WTC11 (cell line): ENCODE measurements at regions of chr1 and their contacts with region 1.

Region 1: DNA sequence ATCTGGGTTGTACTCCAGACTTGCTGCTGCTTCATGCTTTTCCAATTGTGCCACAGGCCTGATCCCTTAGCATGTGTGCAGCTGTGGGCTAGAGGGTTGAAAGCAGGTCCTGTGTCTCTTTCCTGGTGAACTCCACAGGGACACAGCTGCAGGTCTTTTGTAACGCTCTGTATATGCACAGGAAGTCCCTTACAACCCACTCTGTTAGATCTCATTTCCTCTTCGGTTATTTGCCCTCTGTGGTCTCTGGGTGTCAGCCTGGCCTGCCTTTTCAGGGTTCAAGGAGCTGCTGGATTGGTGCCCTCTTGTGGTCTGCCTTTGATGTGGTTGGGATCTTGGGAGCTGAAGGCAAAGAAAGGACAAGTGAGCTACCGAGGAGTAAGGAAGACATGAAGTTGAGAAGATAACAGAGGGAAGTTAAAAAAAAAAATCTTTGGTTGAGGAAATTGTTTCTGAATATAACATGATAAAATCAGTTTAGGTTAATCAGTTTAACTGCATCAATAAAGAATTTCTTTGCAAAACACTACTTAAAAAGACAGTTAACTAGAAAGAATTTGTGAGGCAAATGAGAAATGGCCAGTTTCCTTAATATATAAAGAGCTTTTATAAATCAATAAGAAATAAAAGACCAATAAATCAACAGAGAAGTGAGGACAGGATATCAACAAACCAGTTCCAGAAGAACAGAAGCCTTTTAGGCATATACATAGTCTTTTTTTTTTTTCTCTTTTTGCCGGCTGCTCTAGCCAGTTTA is 44.1 kb downstream of the UCK2 start:
- DNase-seq: peak; percentile 49
- ATAC-seq: peak; percentile 75
- H3K4me3 Mint-ChIP-seq: no peak overlapping the region
- H3K27ac Mint-ChIP-seq: no peak overlapping the region
- H3K4me1 Mint-ChIP-seq: peaks cover 52% of the 10 kb centered on the region
- H3K27me3 Mint-ChIP-seq: no peaks in the 10 kb centered on the region
- CTCF ChIP-seq: no peak

Region 2: GRCh38 chr1:165580941-165581871 is 290.3 kb before region 1 on chr1:
- CTCF ChIA-PET with region 1: no interaction called
- POLR2A ChIA-PET with region 1: no interaction called
- DNase-seq: no peak
- ATAC-seq: no peak
- H3K4me3 Mint-ChIP-seq: no peak overlapping the region
- H3K27ac Mint-ChIP-seq: no peak overlapping the region
- H3K4me1 Mint-ChIP-seq: peaks cover 9% of the 10 kb centered on the region
- H3K27me3 Mint-ChIP-seq: no peaks in the 10 kb centered on the region; the same call in 1 of the 2 replicates
- CTCF ChIP-seq: no peak

Region 3: GRCh38 chr1:165747632-165748447 is 123.6 kb before region 1 on chr1:
- CTCF ChIA-PET with region 1: no interaction called
- POLR2A ChIA-PET with region 1: no interaction called
- DNase-seq: no peak
- ATAC-seq: no peak
- H3K4me3 Mint-ChIP-seq: no peak overlapping the region
- H3K27ac Mint-ChIP-seq: no peak overlapping the region
- H3K4me1 Mint-ChIP-seq: no peaks in the 10 kb centered on the region
- H3K27me3 Mint-ChIP-seq: no peaks in the 10 kb centered on the region
- CTCF ChIP-seq: no peak

Region 4: DNA sequence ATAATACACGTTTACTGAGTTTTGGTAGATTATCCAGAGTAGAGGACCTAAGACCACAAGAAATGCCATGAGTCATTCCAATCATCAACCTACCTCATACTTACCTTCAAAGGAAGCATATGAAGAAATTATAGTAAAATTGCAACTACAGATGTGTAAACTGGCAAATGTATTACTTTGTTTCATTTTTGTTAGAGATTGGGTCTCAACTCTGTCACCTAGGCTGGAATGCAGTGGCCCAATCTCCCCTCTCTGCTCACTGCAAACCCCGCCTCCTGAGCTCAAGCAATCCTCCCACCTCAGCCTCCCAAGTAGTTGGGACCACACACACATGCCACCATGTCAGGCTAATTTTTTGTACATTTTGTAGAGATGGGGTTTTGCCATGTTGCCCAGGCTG is 108.0 kb before region 1 on chr1:
- CTCF ChIA-PET with region 1: no interaction called
- POLR2A ChIA-PET with region 1: no interaction called
- DNase-seq: no peak
- ATAC-seq: no peak
- H3K4me3 Mint-ChIP-seq: no peak overlapping the region
- H3K27ac Mint-ChIP-seq: no peak overlapping the region
- H3K4me1 Mint-ChIP-seq: peaks cover 7% of the 10 kb centered on the region
- H3K27me3 Mint-ChIP-seq: no peaks in the 10 kb centered on the region
- CTCF ChIP-seq: no peak

Region 5: DNA sequence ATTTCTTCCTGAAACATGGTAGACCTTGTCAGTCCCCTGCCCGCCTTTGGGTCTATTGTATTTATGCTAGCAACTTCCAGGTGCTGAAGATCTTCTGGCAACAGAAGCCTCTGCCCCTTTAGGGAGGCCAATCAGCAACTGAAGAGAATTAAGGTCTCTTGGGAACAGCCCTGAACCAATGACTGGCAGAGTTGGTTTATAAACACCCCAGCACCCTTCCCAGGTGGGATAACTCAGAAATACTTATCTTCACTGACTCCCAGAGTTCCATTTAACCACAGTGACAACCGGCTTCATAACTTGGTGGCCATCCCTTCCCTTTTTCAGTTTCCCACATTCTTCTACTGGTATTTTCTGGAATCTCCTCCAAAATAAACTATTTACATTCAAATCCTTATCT is 75.6 kb before region 1 on chr1:
- CTCF ChIA-PET with region 1: no interaction called
- POLR2A ChIA-PET with region 1: no interaction called
- DNase-seq: no peak
- ATAC-seq: peak; percentile 68
- H3K4me3 Mint-ChIP-seq: no peak overlapping the region
- H3K27ac Mint-ChIP-seq: no peak overlapping the region
- H3K4me1 Mint-ChIP-seq: 0 out of 2 replicates have a peak, but pooled peaks cover 3% of the 10 kb centered on the region
- H3K27me3 Mint-ChIP-seq: peaks cover 3% of the 10 kb centered on the region
- CTCF ChIP-seq: no peak

Region 6: DNA sequence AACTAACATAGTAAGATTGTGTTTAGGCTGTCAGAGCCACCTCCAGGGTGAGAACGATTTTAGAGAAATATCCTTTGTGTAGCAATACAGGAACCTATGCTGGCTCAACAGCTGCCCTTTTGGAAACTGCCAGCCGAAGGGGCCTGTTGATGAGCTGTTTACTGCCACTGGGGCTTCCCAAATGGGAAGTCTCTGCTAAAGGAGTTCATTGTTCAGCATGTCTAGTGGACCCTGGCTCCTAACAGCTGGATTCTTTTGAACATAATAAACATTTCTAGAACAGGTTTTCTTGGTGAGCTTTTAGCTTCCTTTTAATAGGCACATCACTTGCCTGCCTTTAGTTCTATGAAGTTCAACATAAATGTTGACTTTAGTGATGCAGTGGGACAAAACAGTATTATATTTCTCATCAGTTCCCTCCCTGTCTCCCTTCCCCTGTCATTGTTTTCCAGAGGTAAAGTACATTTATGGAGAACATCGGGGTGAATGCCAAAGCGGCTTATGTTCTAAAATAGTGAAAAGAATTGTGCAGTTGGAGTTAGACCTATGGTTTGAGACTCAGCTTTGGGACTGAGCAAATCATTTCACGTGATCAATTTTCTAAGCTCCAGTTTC is 13.3 kb after region 1 on chr1:
- CTCF ChIA-PET with region 1: interaction called, 20 read pairs
- POLR2A ChIA-PET with region 1: no interaction called
- DNase-seq: no peak
- ATAC-seq: no peak
- H3K4me3 Mint-ChIP-seq: no peak overlapping the region
- H3K27ac Mint-ChIP-seq: peak overlapping the region; percentile 54; the same call in 1 of the 2 replicates
- H3K4me1 Mint-ChIP-seq: peaks cover 59% of the 10 kb centered on the region
- H3K27me3 Mint-ChIP-seq: no peaks in the 10 kb centered on the region
- CTCF ChIP-seq: no peak